ENCODE measurements at regions of chr6 and their contacts with region 1.

Region 1: GRCh38 chr6:6003621-6004366 is 2.9 kb downstream of the NRN1 start:
- DNase-seq: no peak
- H3K4me3 Mint-ChIP-seq: peak overlapping the region; percentile 79
- H3K27ac Mint-ChIP-seq: peak overlapping the region; percentile 57
- H3K4me1 Mint-ChIP-seq: peaks cover 37% of the 10 kb centered on the region
- H3K27me3 Mint-ChIP-seq: peaks cover 82% of the 10 kb centered on the region

Region 2: GRCh38 chr6:5085193-5085647 is 918.6 kb before region 1 on chr6 and contains the start of gene PPP1R3G:
- intact Hi-C with region 1: loop called (anchors 5 kb)
- DNase-seq: no peak
- H3K4me3 Mint-ChIP-seq: peak within 1 kb of the TSS; percentile 76
- H3K27ac Mint-ChIP-seq: no peak within 1 kb of the TSS
- H3K4me1 Mint-ChIP-seq: no peaks in the 10 kb centered on the region
- H3K27me3 Mint-ChIP-seq: peaks cover 65% of the 10 kb centered on the region
- total RNA-seq, gene PPP1R3G: 0.11 and 0.16 TPM in 2 replicates

Region 3: DNA sequence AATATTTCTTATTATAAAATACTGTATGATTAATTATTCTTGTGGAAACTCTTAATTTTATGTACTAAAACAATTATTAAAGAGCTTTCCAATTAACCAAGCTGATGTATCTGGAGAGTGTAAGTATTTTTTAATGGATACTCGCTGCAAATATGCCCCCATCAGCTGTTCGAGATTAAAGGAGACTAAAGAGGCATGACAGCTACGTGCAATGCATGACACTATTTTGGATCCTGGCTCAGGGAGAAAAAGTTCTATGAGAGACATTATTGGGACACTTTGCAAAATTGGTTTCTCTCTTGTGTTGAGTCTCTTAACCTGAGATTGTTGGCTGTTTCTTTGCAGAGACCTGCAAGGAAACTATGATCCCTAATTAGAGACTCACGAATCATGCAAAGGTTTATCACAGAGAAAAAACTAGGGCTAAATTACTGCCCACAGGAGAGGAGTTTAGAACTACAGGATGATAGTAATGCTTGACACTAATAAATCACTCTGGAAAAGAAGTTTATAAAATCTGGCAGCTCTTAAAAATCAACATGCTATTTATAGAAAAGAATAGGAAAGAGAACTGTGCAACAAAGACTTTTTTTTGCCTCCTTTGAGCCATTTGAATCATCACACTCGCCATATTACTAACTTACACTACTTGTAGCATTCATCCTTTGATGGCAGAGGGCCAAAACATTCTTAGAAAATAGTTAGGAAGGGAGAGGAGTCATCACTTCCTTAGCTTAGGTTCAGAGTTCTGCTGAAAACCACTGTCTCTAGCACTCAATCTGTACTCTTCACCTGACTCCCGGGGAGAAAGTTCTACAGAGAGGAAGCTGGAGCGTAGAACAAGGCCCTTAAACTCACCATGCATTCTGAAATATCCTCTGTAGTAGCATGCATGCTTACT is 22.4 kb before region 1 on chr6:
- intact Hi-C with region 1: no loop called
- DNase-seq: no peak
- H3K4me3 Mint-ChIP-seq: no peak overlapping the region
- H3K27ac Mint-ChIP-seq: no peak overlapping the region
- H3K4me1 Mint-ChIP-seq: peaks cover 21% of the 10 kb centered on the region
- H3K27me3 Mint-ChIP-seq: peaks cover 26% of the 10 kb centered on the region